Activated naive CD8-positive, alpha-beta T cell treated with anti-CD3 and anti-CD28 coated beads, Interleukin-2, amount 10 ng/mL, durations not matched to agents 7 days and 5 days (primary cell): ENCODE measurements at regions of chr19 and their contacts with region 1.

Region 1: GRCh38 chr19:10717356-10718204 is at the start of gene DNM2:
- DNase-seq: peak; percentile 97
- ATAC-seq: peak; percentile 93
- H3K4me3 Mint-ChIP-seq: peak within 1 kb of the TSS; percentile 98
- H3K27ac Mint-ChIP-seq: peak within 1 kb of the TSS; percentile 89
- H3K4me1 Mint-ChIP-seq: peaks cover 25% of the 10 kb centered on the region
- H3K27me3 Mint-ChIP-seq: no peaks in the 10 kb centered on the region
- total RNA-seq, gene DNM2: 249 to 259 TPM

Region 2: DNA sequence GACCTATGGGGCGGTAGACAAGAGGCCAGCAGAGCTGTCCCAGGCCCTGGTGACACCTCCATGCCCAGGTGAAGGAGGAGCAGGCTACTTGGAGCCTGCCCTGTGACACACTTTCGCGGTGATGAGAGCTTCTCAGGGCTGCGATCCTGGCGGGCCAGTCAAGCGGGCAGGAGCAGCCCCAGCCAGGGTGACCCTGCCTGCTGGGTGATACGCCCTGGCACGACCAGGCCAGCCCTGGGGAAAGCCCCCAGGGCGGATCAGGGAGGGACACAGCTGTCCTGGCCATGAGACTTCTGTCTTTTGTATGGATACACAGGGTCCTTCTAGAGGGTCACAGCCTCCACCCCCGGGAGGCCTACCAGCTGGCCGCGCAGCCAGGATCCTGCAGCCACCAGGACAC is 13.3 kb after region 1 on chr19:
- POLR2A ChIA-PET with region 1: interaction called, 24 read pairs
- DNase-seq: peak; percentile 35
- ATAC-seq: no peak
- H3K4me3 Mint-ChIP-seq: peak overlapping the region; percentile 22
- H3K27ac Mint-ChIP-seq: peak overlapping the region; percentile 77
- H3K4me1 Mint-ChIP-seq: peaks cover 45% of the 10 kb centered on the region
- H3K27me3 Mint-ChIP-seq: no peaks in the 10 kb centered on the region

Region 3: DNA sequence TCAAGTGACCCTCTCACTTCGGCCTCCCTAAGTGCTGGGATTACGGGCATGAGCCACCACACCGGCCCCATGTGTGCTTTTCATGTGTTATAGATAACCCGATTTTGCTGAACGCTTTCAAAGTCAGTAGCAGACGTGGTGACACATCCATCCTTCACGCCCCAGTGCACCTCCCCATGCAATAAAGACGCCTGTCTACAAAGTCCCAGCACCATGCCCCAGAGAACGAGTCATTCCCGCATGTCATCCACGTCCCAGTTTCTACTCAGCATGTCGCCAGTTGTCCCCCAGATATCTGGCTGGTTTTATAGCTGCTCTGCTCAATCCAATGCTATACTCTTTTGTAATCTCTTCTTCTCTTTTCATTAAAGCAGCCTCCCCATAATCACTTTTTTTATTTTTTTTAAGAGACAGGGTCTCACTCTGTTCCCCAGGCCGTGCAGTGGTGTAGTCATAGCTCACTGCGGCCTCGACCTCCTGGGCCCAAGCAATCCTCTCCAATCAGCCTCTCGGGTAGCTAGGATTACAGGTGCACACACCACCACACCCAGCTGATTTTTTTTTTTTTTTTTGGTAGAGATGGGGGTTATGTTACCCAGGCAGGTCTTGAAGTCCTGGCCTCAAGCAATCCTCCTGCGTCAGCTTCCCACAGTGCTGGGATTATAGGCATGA is 42.8 kb after region 1 on chr19:
- POLR2A ChIA-PET with region 1: interaction called, 18 read pairs
- DNase-seq: no peak
- ATAC-seq: no peak
- H3K4me3 Mint-ChIP-seq: peak overlapping the region; percentile 75
- H3K27ac Mint-ChIP-seq: peak overlapping the region; percentile 89
- H3K4me1 Mint-ChIP-seq: peaks cover 60% of the 10 kb centered on the region
- H3K27me3 Mint-ChIP-seq: no peaks in the 10 kb centered on the region

Region 4: DNA sequence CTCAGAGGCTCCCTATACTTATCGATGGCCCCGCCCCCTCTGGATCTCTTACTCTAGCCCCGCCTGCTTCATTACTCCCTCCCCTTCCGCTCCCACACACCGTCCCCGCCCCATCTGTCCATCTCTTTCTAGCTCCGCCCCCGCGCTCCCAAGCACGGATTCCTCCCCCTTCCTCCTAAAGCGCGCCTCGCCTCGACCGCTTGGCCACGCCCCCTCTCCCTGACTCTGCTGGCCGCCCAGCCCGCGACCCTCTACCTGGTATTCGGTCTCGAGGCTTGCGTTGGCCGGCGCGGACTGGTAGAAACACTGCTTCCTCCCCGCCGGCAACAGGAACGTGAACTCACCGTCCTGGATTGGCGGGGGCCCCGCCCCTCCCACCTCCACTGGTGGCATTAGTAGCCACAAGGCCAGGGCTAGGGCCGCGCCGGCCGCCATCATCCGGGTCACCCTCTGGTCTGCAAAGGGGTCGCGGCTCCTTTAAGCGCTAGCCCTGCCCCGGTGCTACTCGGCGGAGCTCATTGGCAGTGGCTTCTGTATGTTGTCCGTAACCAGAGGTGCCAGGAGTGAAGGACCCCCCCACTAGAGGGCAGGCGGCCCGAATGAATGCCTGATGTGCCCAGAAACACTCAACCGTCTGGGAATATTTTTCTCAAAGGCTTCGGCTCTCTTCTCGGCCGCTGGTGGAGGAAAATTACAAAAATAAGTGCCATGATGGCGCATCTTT is 118.3 kb after region 1 on chr19 and contains the start of gene TMED1:
- POLR2A ChIA-PET with region 1: interaction called, 26 read pairs
- DNase-seq: peak; percentile 92
- ATAC-seq: peak; percentile 90
- H3K4me3 Mint-ChIP-seq: peak within 1 kb of the TSS; percentile 90
- H3K27ac Mint-ChIP-seq: peak within 1 kb of the TSS; percentile 98
- H3K4me1 Mint-ChIP-seq: peaks cover 14% of the 10 kb centered on the region
- H3K27me3 Mint-ChIP-seq: peaks cover 4% of the 10 kb centered on the region
- total RNA-seq, gene TMED1: 8.6 to 11.8 TPM

Region 5: DNA sequence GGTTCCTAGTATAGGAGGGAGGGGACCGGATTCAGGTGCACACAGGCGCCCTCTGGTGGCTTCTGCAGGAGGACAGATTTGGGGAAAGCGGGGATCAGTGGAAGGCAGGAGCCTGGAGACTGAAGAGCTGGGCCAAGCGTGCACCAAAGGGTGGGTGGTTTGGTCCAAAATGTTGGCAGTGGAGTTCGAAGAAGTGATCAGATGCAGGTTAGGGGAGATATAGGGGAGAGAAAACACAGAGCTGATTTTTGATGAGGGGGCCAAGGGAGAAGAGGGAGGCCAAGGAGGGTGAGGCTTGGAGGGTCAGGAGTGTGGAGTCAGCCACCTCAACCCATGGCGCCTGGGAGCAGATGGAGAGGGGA is 146.9 kb after region 1 on chr19:
- POLR2A ChIA-PET with region 1: interaction called, 21 read pairs
- DNase-seq: peak; percentile 84
- ATAC-seq: peak; percentile 84
- H3K4me3 Mint-ChIP-seq: peak overlapping the region; percentile 24
- H3K27ac Mint-ChIP-seq: peak overlapping the region; percentile 36
- H3K4me1 Mint-ChIP-seq: peaks cover 24% of the 10 kb centered on the region
- H3K27me3 Mint-ChIP-seq: no peaks in the 10 kb centered on the region

Region 6: DNA sequence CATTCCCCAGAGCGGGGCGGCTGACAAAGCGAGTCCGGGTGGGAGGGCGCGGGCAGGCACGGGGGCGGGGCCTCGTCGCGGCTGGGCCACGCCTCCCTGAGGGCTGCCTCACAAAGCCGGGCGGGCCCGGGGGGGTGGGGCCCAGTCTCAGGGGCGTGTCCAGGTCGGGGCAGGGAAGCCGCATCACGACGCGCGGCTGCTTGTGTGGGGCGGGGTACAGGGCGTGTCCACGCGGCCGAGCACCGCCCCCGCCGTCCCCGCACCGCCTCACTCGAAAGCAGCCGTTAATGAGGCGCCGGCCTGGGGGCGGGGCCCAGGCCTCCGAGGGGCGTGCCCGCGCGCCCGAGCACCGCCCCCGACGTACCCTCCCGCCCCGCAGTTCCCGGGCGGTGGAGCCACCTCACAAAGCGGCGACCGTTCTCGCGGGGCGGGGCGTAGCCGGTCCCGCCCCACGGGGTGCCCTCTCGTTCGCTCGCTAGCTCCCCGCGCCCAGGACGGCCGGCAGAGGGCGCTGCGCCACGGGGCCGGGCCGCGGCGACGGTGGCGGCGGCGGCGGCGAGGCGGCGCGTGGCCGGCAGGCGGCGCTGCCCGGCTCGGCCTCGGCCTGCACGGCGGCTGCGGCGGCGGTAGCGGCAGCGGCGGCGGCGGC is 153.5 kb after region 1 on chr19 and contains the start of gene CARM1:
- POLR2A ChIA-PET with region 1: interaction called, 10 read pairs
- DNase-seq: peak; percentile 100
- ATAC-seq: peak; percentile 88
- H3K4me3 Mint-ChIP-seq: peak within 1 kb of the TSS; percentile 87
- H3K27ac Mint-ChIP-seq: peak within 1 kb of the TSS; percentile 90
- H3K4me1 Mint-ChIP-seq: peaks cover 23% of the 10 kb centered on the region
- H3K27me3 Mint-ChIP-seq: no peaks in the 10 kb centered on the region
- total RNA-seq, gene CARM1: 28.3 to 31.5 TPM